OCI-LY7 (cell line): ENCODE measurements at regions of chr3 and their contacts with region 1.

Region 1: DNA sequence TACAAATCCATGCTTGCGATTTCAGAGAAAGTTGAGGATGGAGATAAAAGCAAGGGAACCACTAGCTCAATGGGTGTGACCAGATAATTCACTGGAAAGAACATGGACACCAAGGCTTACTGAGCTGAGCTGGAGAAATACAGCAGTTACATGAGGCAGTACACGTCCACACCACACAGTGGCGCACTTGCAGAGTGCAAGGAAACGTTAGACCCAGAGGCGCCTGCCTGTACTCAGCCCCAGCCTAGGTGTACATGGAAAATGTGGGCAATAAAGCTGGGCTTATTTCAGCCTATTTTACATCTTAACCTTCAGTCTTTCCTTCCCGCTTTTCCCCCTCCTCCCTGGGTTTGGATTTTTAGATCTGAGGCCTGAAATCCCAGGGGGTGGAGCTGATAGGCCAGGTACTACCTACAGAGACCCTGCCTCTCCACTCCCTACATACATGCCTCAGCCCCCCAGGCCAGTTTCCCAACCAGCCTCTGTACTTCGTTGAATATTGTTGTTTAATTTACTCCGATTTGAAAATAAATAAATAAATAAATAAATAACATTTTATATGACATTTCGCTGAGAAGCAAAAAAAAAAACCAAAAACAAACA is 60.1 kb downstream of the PCOLCE2 start:
- DNase-seq: peak; percentile 66
- H3K4me3 ChIP-seq: no peak overlapping the region
- H3K27ac ChIP-seq: no peak overlapping the region
- H3K4me1 ChIP-seq: no peaks in the 10 kb centered on the region
- CTCF ChIP-seq: peak; percentile 86

Region 2: DNA sequence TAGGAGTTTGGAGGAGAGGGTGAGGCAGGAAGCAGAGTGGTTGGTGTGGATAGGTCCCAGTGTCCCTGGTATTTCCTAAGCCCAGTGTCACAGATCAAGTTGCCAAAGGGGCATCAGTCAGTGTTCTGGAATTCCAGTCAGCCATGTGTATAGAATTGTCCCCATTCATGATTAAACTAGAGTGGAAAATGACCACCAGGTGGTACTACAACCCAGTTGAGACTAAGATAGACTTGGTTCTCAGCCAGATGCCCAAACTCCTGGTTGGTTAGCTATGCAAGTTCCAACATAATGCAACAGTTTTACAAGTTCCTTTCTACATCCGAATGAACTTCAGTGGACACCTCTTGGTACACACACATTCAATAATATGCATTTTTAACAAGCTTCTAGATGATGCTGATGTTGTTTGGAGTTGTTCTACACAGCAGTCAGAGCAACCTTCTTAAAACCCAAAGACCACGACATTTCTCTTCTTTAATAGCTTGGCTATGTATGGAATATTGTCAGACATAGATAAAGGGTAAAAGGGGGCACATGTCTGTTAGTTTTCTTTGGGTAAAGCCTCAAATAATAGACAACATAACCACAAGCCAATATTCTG is 241.9 kb before region 1 on chr3:
- CTCF ChIA-PET with region 1: no interaction called
- POLR2A ChIA-PET with region 1: no interaction called
- intact Hi-C with region 1: loop called (anchors 10 kb)
- DNase-seq: peak; percentile 66
- H3K4me3 ChIP-seq: no peak overlapping the region
- H3K27ac ChIP-seq: no peak overlapping the region
- H3K4me1 ChIP-seq: no peaks in the 10 kb centered on the region
- CTCF ChIP-seq: peak; percentile 81

Region 3: DNA sequence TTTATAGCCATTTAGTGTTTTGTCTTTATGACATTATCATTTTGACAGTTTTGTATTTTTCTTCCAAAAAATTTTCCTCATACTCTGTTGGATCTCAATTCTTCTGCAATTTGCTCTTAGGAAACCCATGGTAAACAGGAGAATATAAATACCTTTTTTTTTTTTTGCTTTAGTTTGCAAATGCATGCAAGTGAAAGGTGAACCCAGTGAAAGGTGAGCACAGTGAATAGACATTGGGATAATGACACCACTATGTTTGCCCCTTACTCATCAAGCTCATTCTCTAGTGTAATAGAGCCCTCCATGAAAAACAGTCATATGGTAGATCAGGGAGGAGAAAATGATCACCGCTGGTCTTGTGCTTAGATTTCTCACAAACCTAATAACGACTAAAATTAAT is 164.0 kb before region 1 on chr3:
- CTCF ChIA-PET with region 1: no interaction called
- POLR2A ChIA-PET with region 1: no interaction called
- intact Hi-C with region 1: no loop called
- DNase-seq: no peak
- H3K4me3 ChIP-seq: no peak overlapping the region
- H3K27ac ChIP-seq: no peak overlapping the region
- H3K4me1 ChIP-seq: no peaks in the 10 kb centered on the region
- CTCF ChIP-seq: no peak

Region 4: DNA sequence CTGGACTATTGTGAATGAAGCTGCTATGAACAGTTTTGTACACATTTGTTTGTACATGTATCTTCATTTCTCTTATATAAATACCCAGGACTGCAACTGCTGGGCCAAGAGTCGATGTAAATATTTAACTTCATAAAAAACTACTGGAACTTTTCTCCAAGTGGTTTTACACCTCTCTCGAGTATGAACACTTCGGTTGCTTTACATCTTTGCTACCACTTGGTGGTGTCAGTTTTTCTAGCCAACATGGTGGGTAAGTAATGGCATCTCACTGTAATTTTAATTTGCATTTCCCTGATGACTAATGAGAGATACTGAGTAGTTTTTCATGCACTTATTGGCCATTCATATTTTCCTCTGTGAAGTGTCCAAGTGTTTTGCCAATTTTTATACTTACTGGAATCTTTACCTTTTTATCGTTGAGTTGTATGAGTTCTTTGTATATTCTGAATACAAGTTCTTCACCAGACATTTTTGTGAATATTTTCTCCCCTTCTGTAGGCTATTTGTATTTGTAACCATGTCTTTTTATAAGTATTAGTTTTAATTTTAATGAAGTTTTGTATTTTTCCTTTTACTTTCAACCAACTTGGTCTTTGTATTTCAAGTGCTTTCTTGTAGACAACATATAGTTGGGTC is 15.7 kb after region 1 on chr3:
- CTCF ChIA-PET with region 1: no interaction called
- POLR2A ChIA-PET with region 1: no interaction called
- intact Hi-C with region 1: no loop called
- DNase-seq: peak; percentile 36
- H3K4me3 ChIP-seq: no peak overlapping the region
- H3K27ac ChIP-seq: no peak overlapping the region
- H3K4me1 ChIP-seq: no peaks in the 10 kb centered on the region
- CTCF ChIP-seq: peak; percentile 78

Region 5: DNA sequence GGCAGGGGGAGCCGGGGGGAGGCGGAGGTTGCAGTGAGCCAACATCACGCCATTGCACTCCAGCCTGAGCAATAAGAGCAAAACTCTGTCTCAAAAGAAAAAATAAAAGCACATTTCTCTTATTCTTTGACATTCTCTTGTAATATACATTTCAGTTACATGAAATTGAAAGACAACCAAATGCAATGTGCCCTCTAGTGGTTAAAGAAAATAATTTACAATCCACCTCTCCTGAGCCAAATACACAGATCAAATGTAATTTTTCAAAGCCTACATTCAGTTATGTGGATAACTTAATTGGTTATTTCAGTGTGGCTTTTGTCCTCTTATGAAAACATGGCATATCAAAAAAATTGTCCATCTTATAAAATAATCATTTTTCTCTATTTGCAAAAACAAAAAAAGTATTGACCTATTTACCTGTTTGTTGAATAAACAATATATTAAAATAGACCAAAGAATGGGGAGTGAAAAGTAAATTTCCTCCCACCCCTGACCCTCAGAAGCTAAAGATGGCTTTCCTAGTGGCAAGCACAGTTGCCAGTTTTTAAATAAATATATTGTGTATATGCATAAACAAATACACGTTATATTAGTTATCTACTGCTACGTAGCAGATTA is 158.4 kb after region 1 on chr3:
- CTCF ChIA-PET with region 1: interaction called, 4 read pairs
- POLR2A ChIA-PET with region 1: no interaction called
- intact Hi-C with region 1: loop called (anchors 2 kb)
- DNase-seq: peak; percentile 58
- H3K4me3 ChIP-seq: no peak overlapping the region
- H3K27ac ChIP-seq: no peak overlapping the region
- H3K4me1 ChIP-seq: no peaks in the 10 kb centered on the region
- CTCF ChIP-seq: peak; percentile 87

Region 6: DNA sequence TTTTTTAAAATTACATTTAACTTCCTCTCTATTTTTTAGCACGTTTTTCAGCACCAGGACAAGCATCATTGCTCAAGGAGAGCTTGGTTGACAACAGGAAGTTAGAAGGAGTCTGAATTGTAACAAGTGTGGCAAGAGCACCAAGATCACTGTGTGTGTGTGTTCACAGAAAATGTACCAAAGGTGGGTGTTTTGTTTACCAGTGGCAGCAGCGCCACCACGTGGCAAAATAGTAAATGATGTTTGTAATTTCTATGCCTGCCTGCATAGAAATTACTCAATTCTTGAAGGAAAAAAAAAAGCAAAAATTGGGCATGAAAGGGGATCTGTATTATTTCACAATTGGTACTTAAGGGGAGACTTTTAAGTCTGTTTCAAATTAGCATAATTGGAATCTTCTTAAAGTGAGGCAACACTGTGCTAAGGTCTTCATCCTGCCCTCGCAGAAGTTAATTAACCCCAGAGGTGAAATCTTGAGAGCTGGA is 165.2 kb after region 1 on chr3:
- CTCF ChIA-PET with region 1: interaction called, 6 read pairs
- POLR2A ChIA-PET with region 1: no interaction called
- intact Hi-C with region 1: loop called (anchors 2 kb)
- DNase-seq: peak; percentile 84
- H3K4me3 ChIP-seq: no peak overlapping the region
- H3K27ac ChIP-seq: no peak overlapping the region
- H3K4me1 ChIP-seq: peaks cover 11% of the 10 kb centered on the region
- CTCF ChIP-seq: peak; percentile 93